ENCODE measurements at regions of chr2 and their contacts with region 1.

Region 1: DNA sequence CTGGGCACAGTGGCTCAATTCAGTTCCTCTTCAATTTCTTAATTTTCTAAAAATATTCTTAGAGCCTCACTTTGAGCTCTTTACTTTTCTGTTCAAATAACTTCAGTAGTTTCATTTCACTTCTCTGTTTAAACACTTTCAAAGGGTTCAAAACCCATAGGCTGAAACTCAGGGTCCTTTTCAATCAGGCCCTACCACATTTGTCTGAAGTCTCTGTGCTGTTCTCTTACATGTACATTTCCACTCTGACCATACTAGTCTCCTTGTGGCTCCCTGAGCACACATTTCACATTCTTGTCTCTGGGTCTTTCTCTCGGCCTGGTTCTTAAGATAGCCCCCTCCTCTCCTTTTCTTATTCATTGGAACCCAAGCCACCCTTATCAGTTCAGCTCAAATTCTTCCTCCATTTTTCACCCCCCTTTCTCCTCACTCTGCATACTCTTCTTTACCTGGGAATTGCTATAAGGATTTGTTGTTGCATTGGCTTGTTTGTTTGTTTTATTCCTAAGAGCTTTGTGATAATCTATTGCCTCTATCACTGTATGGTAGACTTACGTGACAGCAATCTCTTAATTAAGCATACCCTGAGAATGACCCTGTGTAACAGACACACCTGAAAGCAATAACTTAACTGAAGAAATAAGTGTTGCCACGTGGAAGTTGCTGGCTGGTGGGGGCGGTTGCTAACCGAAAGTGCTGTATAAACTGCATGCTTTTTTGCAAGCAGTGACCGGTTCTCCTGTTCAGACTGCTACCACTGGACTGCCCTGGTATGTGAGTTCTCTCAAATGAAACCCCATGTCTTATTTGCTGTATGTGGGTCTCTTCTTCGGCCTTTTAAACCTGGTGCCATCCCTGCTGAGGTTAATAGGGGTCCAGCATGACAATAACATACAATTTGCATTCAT is 27.7 kb upstream of the ACADL start:
- DNase-seq: no peak
- H3K4me3 ChIP-seq: no peak overlapping the region
- H3K27ac ChIP-seq: no peak overlapping the region
- H3K4me1 ChIP-seq: no peaks in the 10 kb centered on the region
- CTCF ChIP-seq: no peak

Region 2: GRCh38 chr2:208830203-208830602 is 1422.8 kb before region 1 on chr2:
- CTCF ChIA-PET with region 1: no interaction called
- POLR2A ChIA-PET with region 1: no interaction called
- intact Hi-C with region 1: no loop called
- DNase-seq: no peak
- H3K4me3 ChIP-seq: no peak overlapping the region
- H3K27ac ChIP-seq: no peak overlapping the region
- H3K4me1 ChIP-seq: no peaks in the 10 kb centered on the region
- CTCF ChIP-seq: no peak

Region 3: DNA sequence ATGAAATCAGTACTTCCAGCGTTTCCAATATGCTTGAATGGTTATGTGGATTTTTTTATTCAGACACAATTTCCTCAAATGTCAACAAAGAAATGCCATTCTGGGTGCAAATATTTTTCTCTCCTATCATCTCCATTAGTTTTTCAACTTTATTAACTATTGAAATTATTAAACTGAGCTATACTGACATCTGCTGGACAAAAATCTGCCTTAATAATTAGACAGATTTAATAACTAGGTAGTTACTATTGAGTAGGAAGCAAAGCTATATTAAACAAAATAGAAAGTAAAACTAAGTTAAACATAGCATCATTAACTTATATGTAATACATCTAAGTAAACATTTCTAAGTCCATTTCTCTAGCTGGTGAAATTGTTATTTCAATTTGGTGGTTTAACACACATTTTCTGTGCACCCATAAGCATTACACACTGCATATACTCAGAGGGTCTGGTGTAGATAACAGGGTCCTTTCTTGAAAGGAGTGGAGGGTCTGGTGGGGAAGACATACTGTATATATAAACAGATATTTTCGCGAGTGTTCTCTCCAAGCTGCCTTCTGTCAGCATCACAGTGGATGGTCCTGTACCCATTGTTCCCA is 146.6 kb after region 1 on chr2:
- CTCF ChIA-PET with region 1: no interaction called
- POLR2A ChIA-PET with region 1: no interaction called
- intact Hi-C with region 1: loop called (anchors 5 kb)
- DNase-seq: peak; percentile 14
- H3K4me3 ChIP-seq: no peak overlapping the region
- H3K27ac ChIP-seq: no peak overlapping the region
- H3K4me1 ChIP-seq: no peaks in the 10 kb centered on the region
- CTCF ChIP-seq: peak; percentile 79

Region 4: GRCh38 chr2:211157856-211158463 is 905.0 kb after region 1 on chr2:
- CTCF ChIA-PET with region 1: no interaction called
- POLR2A ChIA-PET with region 1: no interaction called
- intact Hi-C with region 1: loop called (anchors 10 kb)
- DNase-seq: peak; percentile 76
- H3K4me3 ChIP-seq: no peak overlapping the region
- H3K27ac ChIP-seq: no peak overlapping the region
- H3K4me1 ChIP-seq: no peaks in the 10 kb centered on the region
- CTCF ChIP-seq: peak; percentile 96